GM12878 (cell line): ENCODE measurements at regions of chr15 and their contacts with region 1.

Region 1: DNA sequence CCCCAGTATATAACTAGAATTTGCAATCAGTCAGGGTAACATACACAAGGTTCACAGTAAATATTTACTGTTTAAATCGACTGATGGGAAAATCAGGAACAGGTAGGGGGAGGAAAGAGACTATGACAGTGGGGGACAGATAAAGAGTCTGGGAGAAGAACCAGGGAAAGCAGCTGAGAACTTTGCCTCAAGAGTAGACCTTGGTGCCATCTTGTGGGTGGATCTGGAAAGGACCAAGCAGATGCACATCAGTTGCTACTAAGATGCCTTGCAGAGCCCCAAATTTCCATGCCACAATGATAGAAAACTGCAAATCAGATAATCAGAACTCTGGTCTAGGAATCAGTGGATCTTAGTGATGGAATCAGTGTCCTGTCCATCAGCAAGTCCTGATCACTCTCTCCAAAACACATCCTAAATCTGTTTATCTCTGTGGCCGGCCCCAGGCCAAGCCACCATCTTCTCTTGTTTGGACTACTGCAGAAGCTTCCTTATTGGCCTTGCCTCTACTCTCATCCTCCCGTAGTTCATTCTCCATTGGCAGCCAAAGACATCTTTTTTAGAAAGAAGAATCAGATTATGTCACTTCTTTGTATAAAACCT is 62.7 kb downstream of the PDE8A start:
- DNase-seq: peak; percentile 44
- ATAC-seq: peak; percentile 88
- H3K4me3 ChIP-seq: no peak overlapping the region
- H3K27ac ChIP-seq: no peak overlapping the region
- H3K4me1 ChIP-seq: no peaks in the 10 kb centered on the region; the same call in 1 of the 2 replicates
- H3K27me3 ChIP-seq: no peaks in the 10 kb centered on the region
- CTCF ChIP-seq: peak; percentile 66 to 77 (median 74)
- EP300 ChIP-seq: no peak
- POLR2A ChIP-seq: no peak
- RAD21 ChIP-seq: peak; percentile 85

Region 2: DNA sequence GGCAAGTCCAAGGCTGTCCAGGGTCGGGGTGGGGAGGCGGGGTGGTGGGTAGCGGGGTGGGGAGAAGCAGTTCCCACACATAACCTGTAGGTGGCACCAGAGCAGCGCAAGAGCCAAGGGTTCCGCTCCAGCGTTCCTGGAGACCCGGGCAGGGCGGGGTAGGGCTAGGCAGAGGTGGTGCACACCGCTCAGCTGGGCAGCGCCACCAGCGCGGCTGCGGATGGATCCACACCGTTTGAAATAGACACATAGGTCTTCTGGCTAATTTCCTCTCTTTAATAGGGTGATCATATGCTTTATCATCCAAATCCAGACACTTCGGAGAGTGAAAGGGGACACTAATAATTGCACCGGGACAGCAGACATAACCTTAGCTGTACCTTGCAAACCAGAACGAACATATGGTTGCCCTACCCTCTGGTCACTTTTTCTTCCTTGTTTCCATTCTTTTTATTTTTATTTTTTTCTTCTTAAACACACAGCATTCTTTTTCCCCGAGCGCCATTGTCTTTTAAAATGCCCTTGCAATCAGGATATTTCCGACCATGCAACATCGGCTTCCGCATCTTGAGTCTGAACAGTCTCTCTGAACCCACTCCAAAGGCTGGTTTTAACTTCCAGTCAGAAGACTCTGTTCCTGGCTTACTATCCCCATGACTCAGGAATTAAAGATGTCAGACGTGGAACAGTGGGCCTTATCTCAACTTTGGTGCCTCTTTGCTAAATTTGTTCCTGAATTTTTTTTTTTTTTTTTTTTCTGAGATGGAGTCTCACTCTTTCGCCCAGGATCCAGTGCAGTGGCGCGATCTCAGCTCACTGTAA is 456.1 kb before region 1 on chr15:
- CTCF ChIA-PET with region 1: interaction called, 3 read pairs
- POLR2A ChIA-PET with region 1: no interaction called
- RAD21 ChIA-PET with region 1: no interaction called
- SMC1A ChIA-PET with region 1: interaction called, 12 read pairs
- in situ Hi-C with region 1: loop called (anchors 5 kb)
- intact Hi-C with region 1: loop called (anchors 5 kb)
- DNase-seq: no peak
- ATAC-seq: peak; percentile 100
- H3K4me3 ChIP-seq: no peak overlapping the region; the same call in 1 of the 2 replicates
- H3K27ac ChIP-seq: no peak overlapping the region
- H3K4me1 ChIP-seq: no peaks in the 10 kb centered on the region
- H3K27me3 ChIP-seq: no peaks in the 10 kb centered on the region; a peak in 2 of 4 replicates
- CTCF ChIP-seq: peak; percentile 43 to 88 (median 72)
- EP300 ChIP-seq: no peak
- POLR2A ChIP-seq: no peak
- RAD21 ChIP-seq: peak; percentile 80

Region 3: GRCh38 chr15:84929744-84930371 is 114.5 kb before region 1 on chr15:
- CTCF ChIA-PET with region 1: interaction called, 14 read pairs
- POLR2A ChIA-PET with region 1: no interaction called
- RAD21 ChIA-PET with region 1: interaction called, 9 read pairs
- SMC1A ChIA-PET with region 1: interaction called, 7 read pairs
- in situ Hi-C with region 1: no loop called
- intact Hi-C with region 1: no loop called
- DNase-seq: no peak
- ATAC-seq: no peak
- H3K4me3 ChIP-seq: no peak overlapping the region
- H3K27ac ChIP-seq: no peak overlapping the region
- H3K4me1 ChIP-seq: no peaks in the 10 kb centered on the region
- H3K27me3 ChIP-seq: no peaks in the 10 kb centered on the region
- CTCF ChIP-seq: no peak
- EP300 ChIP-seq: no peak
- POLR2A ChIP-seq: no peak
- RAD21 ChIP-seq: no peak

Region 4: GRCh38 chr15:84961114-84961452 is 83.3 kb before region 1 on chr15:
- CTCF ChIA-PET with region 1: interaction called, 47 read pairs
- POLR2A ChIA-PET with region 1: no interaction called
- RAD21 ChIA-PET with region 1: interaction called, 36 read pairs
- SMC1A ChIA-PET with region 1: interaction called, 23 read pairs
- in situ Hi-C with region 1: loop called (anchors 5 kb)
- intact Hi-C with region 1: no loop called
- DNase-seq: no peak
- ATAC-seq: no peak
- H3K4me3 ChIP-seq: no peak overlapping the region
- H3K27ac ChIP-seq: no peak overlapping the region
- H3K4me1 ChIP-seq: no peaks in the 10 kb centered on the region
- H3K27me3 ChIP-seq: no peaks in the 10 kb centered on the region
- CTCF ChIP-seq: no peak
- EP300 ChIP-seq: no peak
- POLR2A ChIP-seq: no peak
- RAD21 ChIP-seq: no peak

Region 5: GRCh38 chr15:85005319-85005718 is 39.0 kb before region 1 on chr15:
- CTCF ChIA-PET with region 1: interaction called, 10 read pairs
- POLR2A ChIA-PET with region 1: no interaction called
- RAD21 ChIA-PET with region 1: interaction called, 9 read pairs
- SMC1A ChIA-PET with region 1: interaction called, 16 read pairs
- in situ Hi-C with region 1: no loop called
- intact Hi-C with region 1: no loop called
- DNase-seq: no peak
- ATAC-seq: no peak
- H3K4me3 ChIP-seq: no peak overlapping the region
- H3K27ac ChIP-seq: no peak overlapping the region
- H3K4me1 ChIP-seq: peaks cover 47% of the 10 kb centered on the region
- H3K27me3 ChIP-seq: no peaks in the 10 kb centered on the region
- CTCF ChIP-seq: no peak
- EP300 ChIP-seq: no peak
- POLR2A ChIP-seq: no peak
- RAD21 ChIP-seq: no peak

Region 6: GRCh38 chr15:85059734-85060133 is 15.4 kb after region 1 on chr15:
- CTCF ChIA-PET with region 1: interaction called, 3 read pairs
- POLR2A ChIA-PET with region 1: no interaction called
- RAD21 ChIA-PET with region 1: no interaction called
- SMC1A ChIA-PET with region 1: interaction called, 11 read pairs
- in situ Hi-C with region 1: no loop called
- intact Hi-C with region 1: no loop called
- DNase-seq: no peak
- ATAC-seq: no peak
- H3K4me3 ChIP-seq: no peak overlapping the region
- H3K27ac ChIP-seq: no peak overlapping the region
- H3K4me1 ChIP-seq: no peaks in the 10 kb centered on the region
- H3K27me3 ChIP-seq: no peaks in the 10 kb centered on the region
- CTCF ChIP-seq: no peak
- EP300 ChIP-seq: no peak
- POLR2A ChIP-seq: no peak
- RAD21 ChIP-seq: no peak

Region 7: DNA sequence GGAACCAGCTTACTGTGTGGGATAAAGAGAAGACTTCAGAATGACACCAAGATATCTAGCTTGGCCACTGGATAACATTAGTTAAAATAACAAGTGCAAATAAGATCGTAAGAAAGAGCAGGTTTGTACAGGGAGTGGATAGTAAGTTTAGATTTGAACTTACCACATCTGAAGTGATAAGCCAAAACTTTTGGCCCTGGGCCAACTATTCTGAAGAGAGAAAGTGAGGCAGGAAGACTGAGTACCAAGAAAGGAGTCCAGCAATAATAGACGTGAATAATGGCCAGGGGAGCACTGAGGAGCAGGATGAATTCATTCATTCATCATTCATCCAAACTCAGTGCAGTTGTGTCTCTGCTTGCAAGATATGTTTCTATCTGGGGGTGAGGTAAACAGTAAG is 60.2 kb after region 1 on chr15:
- CTCF ChIA-PET with region 1: no interaction called
- POLR2A ChIA-PET with region 1: no interaction called
- RAD21 ChIA-PET with region 1: no interaction called
- SMC1A ChIA-PET with region 1: no interaction called
- in situ Hi-C with region 1: no loop called
- intact Hi-C with region 1: no loop called
- DNase-seq: no peak
- ATAC-seq: no peak
- H3K4me3 ChIP-seq: no peak overlapping the region
- H3K27ac ChIP-seq: no peak overlapping the region
- H3K4me1 ChIP-seq: no peaks in the 10 kb centered on the region
- H3K27me3 ChIP-seq: no peaks in the 10 kb centered on the region
- CTCF ChIP-seq: no peak
- EP300 ChIP-seq: no peak
- POLR2A ChIP-seq: no peak
- RAD21 ChIP-seq: no peak